ENCODE measurements at regions of chr3 and their contacts with region 1.

Region 1: GRCh38 chr3:187150599-187150998 is 11.3 kb upstream of the RPL39L start:
- DNase-seq: peak; percentile 37 to 80 (median 65)
- ATAC-seq: peak; percentile 56
- H3K4me3 ChIP-seq: no peak overlapping the region
- H3K4me3 Mint-ChIP-seq: no peak overlapping the region
- H3K27ac ChIP-seq: no peak overlapping the region
- H3K27ac Mint-ChIP-seq: no peak overlapping the region
- H3K4me1 ChIP-seq: no peaks in the 10 kb centered on the region
- H3K4me1 Mint-ChIP-seq: peaks cover 9% of the 10 kb centered on the region
- H3K27me3 ChIP-seq: no peaks in the 10 kb centered on the region
- H3K27me3 Mint-ChIP-seq: no peaks in the 10 kb centered on the region
- CTCF ChIP-seq: peak; percentile 39

Region 2: GRCh38 chr3:187125319-187126031 is 25.1 kb before region 1 on chr3:
- CTCF ChIA-PET with region 1: interaction called, 19 read pairs
- POLR2A ChIA-PET with region 1: interaction called, 5 read pairs
- intact Hi-C with region 1: no loop called
- DNase-seq: no peak
- ATAC-seq: no peak
- H3K4me3 ChIP-seq: no peak overlapping the region
- H3K4me3 Mint-ChIP-seq: no peak overlapping the region
- H3K27ac ChIP-seq: no peak overlapping the region
- H3K27ac Mint-ChIP-seq: no peak overlapping the region
- H3K4me1 ChIP-seq: peaks cover 8% of the 10 kb centered on the region
- H3K4me1 Mint-ChIP-seq: peaks cover 12% of the 10 kb centered on the region
- H3K27me3 ChIP-seq: no peaks in the 10 kb centered on the region
- H3K27me3 Mint-ChIP-seq: no peaks in the 10 kb centered on the region
- CTCF ChIP-seq: no peak

Measured in CD8-positive, alpha-beta T cell (primary cell).